Aorta (tissue), 5 donors: ENCODE measurements at regions of chr1 and their contacts with region 1.

Region 1: DNA sequence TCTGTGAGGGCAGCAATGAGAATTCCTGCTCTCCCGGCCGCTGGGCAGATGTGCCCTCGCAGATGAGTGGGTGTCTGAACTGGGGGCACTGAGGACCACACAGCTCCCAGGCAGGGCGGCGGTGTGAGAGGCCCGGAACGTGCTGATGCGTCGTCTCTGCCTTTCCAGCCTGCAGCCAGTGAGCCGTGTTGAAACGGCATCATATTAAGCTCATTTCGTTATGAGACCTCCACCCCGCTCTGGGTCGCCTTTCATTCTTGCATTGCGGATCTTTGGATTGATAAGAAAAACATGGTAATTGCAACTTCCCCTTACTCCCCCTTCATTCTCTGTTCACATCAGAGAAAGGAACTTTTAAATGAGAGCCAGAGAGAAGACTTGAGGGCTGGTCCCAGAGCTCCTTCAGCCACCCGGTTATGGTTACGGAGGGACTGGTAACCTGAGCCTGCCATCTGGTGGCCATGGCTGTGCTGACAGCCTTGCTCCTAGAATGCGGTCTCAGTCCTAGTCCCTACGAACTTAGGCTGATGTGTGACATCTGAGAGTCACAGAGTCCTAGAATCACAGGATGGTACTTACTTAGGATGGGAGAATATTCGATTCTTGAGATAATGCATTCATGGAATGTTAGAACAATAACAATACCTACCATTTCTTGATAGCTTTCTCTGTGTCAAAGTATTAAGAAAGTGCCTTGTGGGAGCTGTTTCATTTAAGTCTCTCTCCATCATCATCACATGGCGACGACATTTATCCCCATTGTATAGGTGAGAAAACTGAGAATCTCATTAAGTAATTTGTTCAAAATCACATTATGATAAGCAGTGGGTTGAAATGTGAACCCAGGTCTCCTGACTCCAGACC is 271.0 kb downstream of the TRABD2B start:
- DNase-seq: peak; percentile 86 to 93
- ATAC-seq: peak; percentile 89
- H3K4me3 ChIP-seq: no peak overlapping the region
- H3K27ac ChIP-seq: no peak overlapping the region
- H3K4me1 ChIP-seq: no peaks in the 10 kb centered on the region
- H3K27me3 ChIP-seq: no peaks in the 10 kb centered on the region

Region 2: DNA sequence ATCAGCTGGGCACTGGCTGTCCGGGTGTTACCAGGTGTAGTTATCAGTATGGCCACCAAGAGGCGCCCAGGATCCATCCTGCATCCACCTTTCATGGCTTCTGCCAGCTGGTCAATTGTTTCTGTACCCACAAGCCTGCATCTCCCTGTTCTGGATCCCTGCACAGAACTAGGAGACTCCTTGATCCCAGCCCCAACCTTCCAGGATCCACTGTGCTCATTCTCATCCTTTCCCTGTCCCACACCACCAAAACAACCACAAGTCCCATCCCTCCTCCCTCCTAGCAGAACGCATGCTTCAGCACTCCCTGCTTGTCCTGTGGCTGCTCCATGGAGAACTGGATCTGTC is 337.4 kb before region 1 on chr1:
- intact Hi-C with region 1: loop called in 1 of 2 experiments (anchors 2 kb)
- DNase-seq: peak; percentile 61 to 83
- ATAC-seq: peak; percentile 87
- H3K4me3 ChIP-seq: no peak overlapping the region
- H3K27ac ChIP-seq: no peak overlapping the region
- H3K4me1 ChIP-seq: no peaks in the 10 kb centered on the region
- H3K27me3 ChIP-seq: no peaks in the 10 kb centered on the region

Region 3: DNA sequence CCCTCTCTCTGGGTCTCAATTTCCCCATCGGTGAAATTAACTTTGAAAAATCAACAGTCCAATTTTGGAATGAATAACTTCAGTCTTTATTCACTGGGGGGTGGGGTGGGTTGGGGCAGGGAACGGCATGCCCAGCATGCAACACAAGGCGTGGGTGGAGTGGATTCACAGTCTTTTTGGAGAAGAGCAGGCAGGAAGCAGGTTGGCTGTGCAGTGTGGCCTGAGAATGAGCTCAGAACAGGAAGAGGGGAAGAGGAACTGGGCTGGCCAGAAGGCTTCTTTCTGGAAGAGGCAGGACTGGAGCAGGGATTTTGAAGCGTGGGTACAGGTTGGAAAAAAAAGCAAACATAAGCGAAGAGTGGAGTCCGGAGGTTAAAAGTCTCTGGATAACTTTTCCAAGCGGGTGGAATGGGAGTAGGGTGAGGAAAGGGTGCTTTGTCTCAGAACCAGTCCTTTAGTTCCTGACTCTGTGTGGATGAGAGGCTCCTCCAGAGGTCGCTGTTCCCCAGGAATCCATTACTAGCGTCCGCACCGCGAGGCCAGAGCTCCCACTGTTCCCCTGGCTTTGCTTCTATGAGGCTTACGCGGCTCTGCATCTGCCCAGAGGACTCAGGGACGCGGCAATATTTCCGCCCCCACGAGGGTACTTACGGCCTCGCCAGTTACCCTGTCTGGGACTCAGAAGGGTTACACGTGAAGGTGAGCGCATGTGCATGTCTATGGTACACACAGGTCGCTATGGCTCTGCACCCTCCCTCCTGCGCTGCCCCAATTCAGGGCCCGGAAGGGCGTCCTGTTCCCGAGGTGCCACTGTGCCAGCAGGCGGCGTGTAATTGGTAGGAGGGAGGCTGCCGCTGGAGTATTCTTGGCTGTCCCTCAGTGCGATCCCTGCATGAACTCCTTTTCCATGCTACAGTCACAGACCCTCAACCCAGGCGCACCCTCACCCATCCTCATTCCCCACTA is 293.9 kb before region 1 on chr1:
- intact Hi-C with region 1: loop called (anchors 5 kb)
- DNase-seq: peak; percentile 87 to 91
- ATAC-seq: peak; percentile 75
- H3K4me3 ChIP-seq: no peak overlapping the region
- H3K27ac ChIP-seq: no peak overlapping the region
- H3K4me1 ChIP-seq: no peaks in the 10 kb centered on the region
- H3K27me3 ChIP-seq: no peaks in the 10 kb centered on the region

Region 4: GRCh38 chr1:47755101-47755990 is 29.1 kb after region 1 on chr1:
- intact Hi-C with region 1: no loop called
- DNase-seq: no peak
- ATAC-seq: no peak
- H3K4me3 ChIP-seq: no peak overlapping the region
- H3K27ac ChIP-seq: no peak overlapping the region
- H3K4me1 ChIP-seq: peaks cover 0 to 8% of the 10 kb centered on the region in 2 donors
- H3K27me3 ChIP-seq: no peaks in the 10 kb centered on the region